MCF 10A (cell line): ENCODE measurements at regions of chr1 and their contacts with region 1.

Region 1: DNA sequence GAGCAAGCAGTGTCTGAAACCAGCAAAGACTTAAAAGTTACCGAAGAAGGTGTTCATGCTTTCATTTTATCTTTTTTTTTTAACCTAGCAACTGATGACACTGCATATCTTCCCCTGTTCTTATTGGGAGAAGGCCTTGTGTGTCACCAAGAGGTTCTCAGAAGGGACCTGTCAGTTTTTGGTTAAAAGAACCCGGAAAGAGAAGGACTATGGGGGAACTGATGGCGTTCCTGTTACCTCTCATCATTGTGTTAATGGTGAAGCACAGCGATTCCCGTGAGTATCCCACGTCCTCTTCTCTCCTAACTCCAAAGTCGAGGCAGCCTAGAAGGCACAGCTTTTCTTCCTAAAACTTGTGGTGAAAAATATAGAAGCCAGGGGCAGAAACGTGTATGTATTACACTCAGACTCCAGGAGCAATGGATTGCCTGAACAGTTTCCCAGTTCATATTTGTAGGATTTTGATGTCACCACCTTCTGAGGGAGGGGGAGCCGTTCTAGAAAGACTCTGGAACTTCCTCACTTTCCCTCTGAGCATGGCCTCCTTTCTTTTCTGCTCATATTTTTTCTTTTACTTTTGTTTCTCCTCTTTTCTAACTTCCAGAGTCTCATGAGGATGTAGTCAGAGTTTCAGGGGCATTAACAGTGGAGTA is at the start of gene MR1:
- DNase-seq: peak; percentile 94
- H3K4me3 Mint-ChIP-seq: peak within 1 kb of the TSS; percentile 91
- H3K27ac Mint-ChIP-seq: peak within 1 kb of the TSS; percentile 98
- H3K4me1 Mint-ChIP-seq: peaks cover 49% of the 10 kb centered on the region
- H3K27me3 Mint-ChIP-seq: no peaks in the 10 kb centered on the region
- CTCF ChIP-seq: no peak
- total RNA-seq, gene MR1: 33.4 and 46.6 TPM in 2 replicates

Region 2: GRCh38 chr1:180515864-180516388 is 518.0 kb before region 1 on chr1:
- CTCF ChIA-PET with region 1: interaction called, 6 read pairs
- POLR2A ChIA-PET with region 1: interaction called, 3 read pairs
- intact Hi-C with region 1: loop called (anchors 5 kb)
- DNase-seq: peak; percentile 95
- H3K4me3 Mint-ChIP-seq: no peak overlapping the region
- H3K27ac Mint-ChIP-seq: peak overlapping the region; percentile 91
- H3K4me1 Mint-ChIP-seq: peaks cover 7% of the 10 kb centered on the region
- H3K27me3 Mint-ChIP-seq: no peaks in the 10 kb centered on the region
- CTCF ChIP-seq: peak; percentile 98

Region 3: GRCh38 chr1:180762796-180763195 is 271.1 kb before region 1 on chr1:
- CTCF ChIA-PET with region 1: no interaction called
- POLR2A ChIA-PET with region 1: no interaction called
- intact Hi-C with region 1: no loop called
- DNase-seq: no peak
- H3K4me3 Mint-ChIP-seq: no peak overlapping the region
- H3K27ac Mint-ChIP-seq: no peak overlapping the region
- H3K4me1 Mint-ChIP-seq: no peaks in the 10 kb centered on the region
- H3K27me3 Mint-ChIP-seq: no peaks in the 10 kb centered on the region
- CTCF ChIP-seq: no peak

Region 4: GRCh38 chr1:180842052-180842451 is 191.9 kb before region 1 on chr1:
- CTCF ChIA-PET with region 1: no interaction called
- POLR2A ChIA-PET with region 1: no interaction called
- intact Hi-C with region 1: no loop called
- DNase-seq: no peak
- H3K4me3 Mint-ChIP-seq: no peak overlapping the region
- H3K27ac Mint-ChIP-seq: no peak overlapping the region
- H3K4me1 Mint-ChIP-seq: no peaks in the 10 kb centered on the region
- H3K27me3 Mint-ChIP-seq: no peaks in the 10 kb centered on the region
- CTCF ChIP-seq: no peak

Region 5: DNA sequence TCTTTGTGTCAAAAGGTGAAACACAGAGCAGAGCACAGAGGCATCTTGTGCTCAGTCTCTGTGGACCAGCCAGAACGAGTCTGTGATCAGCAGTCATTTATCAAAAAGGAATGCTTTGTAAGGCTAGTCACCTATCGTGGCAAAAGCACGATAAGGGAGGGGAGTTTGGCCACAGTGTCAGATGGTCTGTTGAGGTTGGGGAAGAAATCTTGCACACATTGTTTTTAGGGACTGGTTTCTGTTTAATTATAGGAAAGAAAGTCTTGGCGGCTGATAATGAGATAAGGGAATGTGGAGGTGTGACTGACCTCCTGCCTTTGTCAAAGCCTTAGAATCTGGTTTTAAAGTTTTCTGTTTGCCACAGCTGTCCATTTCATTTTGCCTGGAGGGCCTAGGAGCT is 179.4 kb before region 1 on chr1:
- CTCF ChIA-PET with region 1: no interaction called
- POLR2A ChIA-PET with region 1: no interaction called
- intact Hi-C with region 1: no loop called
- DNase-seq: no peak
- H3K4me3 Mint-ChIP-seq: no peak overlapping the region
- H3K27ac Mint-ChIP-seq: no peak overlapping the region
- H3K4me1 Mint-ChIP-seq: peaks cover 34% of the 10 kb centered on the region
- H3K27me3 Mint-ChIP-seq: no peaks in the 10 kb centered on the region
- CTCF ChIP-seq: no peak

Region 6: GRCh38 chr1:180954005-180954800 is 79.7 kb before region 1 on chr1:
- CTCF ChIA-PET with region 1: no interaction called
- POLR2A ChIA-PET with region 1: no interaction called
- intact Hi-C with region 1: no loop called
- DNase-seq: no peak
- H3K4me3 Mint-ChIP-seq: no peak overlapping the region
- H3K27ac Mint-ChIP-seq: no peak overlapping the region
- H3K4me1 Mint-ChIP-seq: peaks cover 5% of the 10 kb centered on the region
- H3K27me3 Mint-ChIP-seq: no peaks in the 10 kb centered on the region
- CTCF ChIP-seq: no peak

Region 7: DNA sequence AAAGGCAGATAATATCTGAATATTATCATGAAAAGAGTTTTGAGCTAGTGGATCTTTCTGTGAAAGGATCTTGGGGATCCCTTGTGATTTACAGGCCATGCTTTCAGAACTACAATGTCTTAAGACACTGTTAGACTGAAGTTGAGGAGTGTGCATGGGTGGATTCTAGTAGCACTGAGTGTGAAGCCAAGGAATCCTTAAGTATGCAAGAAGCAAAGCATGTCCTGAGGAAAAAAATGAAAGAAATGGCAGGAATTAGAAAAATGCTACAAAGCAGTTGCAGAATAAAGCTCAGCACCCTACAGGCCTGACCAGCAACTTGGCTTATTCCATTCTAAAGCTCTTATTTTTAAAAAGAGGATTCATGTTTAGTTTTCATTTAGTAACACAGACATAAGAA is 23.1 kb before region 1 on chr1:
- CTCF ChIA-PET with region 1: interaction called, 3 read pairs
- POLR2A ChIA-PET with region 1: interaction called, 13 read pairs
- intact Hi-C with region 1: no loop called
- DNase-seq: no peak
- H3K4me3 Mint-ChIP-seq: no peak overlapping the region
- H3K27ac Mint-ChIP-seq: no peak overlapping the region
- H3K4me1 Mint-ChIP-seq: peaks cover 27% of the 10 kb centered on the region
- H3K27me3 Mint-ChIP-seq: no peaks in the 10 kb centered on the region
- CTCF ChIP-seq: no peak

Region 8: DNA sequence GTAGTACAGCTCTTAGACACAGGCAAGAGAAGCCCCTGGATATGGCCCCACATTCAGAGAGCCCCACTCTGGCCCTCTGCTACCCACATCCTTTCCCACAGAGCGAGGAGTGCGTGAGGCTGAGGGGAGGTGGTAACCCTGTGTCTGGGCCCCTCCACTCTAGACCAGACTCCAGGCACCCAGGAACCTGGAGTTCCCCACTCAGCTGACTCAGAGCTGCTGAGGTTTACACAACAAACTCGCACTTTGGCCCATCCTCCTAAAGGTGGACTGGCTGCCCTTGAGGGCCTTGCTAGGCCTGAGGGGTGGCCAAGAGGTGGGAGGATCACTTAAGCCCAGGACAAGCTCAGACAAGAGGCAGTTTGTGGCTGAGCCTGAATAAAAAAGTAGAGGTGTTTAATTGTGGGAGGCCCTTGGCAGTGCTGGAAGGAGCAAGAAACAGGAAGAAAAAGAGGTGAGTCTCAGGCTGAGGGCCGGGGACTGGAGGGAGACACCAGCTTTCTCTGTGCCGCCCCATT is 10.6 kb after region 1 on chr1:
- CTCF ChIA-PET with region 1: interaction called, 10 read pairs
- POLR2A ChIA-PET with region 1: interaction called, 94 read pairs
- intact Hi-C with region 1: no loop called
- DNase-seq: peak; percentile 99
- H3K4me3 Mint-ChIP-seq: peak overlapping the region; percentile 58
- H3K27ac Mint-ChIP-seq: peak overlapping the region; percentile 88
- H3K4me1 Mint-ChIP-seq: peaks cover 41% of the 10 kb centered on the region
- H3K27me3 Mint-ChIP-seq: no peaks in the 10 kb centered on the region
- CTCF ChIP-seq: no peak

Region 9: DNA sequence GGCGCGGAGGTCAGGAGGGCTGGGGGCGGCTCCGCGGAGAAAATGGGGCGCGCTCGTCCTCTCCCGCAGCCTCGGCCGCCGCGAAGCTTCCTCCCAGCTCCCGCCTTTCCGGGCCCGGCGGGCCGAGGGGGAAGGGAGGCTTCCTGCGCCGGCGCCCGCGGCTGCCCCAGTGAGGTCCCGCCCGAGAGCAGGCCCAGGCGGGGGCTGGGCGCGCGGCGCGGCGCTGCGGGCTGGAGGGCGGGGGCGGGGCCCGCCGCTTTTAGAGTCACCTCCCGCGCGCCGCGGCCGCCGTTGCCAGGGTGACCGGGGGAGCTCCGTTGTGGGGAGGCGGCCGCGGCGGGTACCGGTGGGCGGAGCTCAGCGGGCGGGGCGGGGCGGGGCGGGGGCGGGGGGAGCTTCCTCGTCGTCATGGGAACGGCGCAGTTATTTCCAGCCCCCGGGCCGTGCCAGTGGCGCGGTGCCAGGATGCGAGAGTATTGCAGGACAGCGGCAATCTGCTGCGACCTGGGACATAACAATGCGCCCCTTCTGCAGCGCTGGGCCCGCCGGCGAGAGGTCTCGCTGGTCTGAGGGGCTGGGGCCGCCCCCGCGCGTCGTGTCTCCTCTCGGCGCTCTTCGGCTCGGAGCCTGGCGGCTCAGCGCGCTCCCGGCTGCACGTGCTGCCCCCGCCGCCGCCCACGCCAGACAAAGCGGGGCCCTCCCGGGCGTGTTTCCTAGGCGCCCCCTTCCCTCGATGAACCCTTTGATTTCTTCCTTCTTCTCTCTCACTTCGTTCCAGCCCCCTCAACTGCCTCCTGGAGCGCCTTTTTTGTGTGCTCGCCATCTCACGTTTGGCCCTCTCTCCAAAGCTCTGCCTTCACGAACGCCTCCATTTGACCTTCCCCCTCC is 71.5 kb after region 1 on chr1:
- CTCF ChIA-PET with region 1: no interaction called
- POLR2A ChIA-PET with region 1: interaction called, 22 read pairs
- intact Hi-C with region 1: no loop called
- DNase-seq: peak; percentile 95
- H3K4me3 Mint-ChIP-seq: peak overlapping the region; percentile 65
- H3K27ac Mint-ChIP-seq: peak overlapping the region; percentile 22
- H3K4me1 Mint-ChIP-seq: peaks cover 61% of the 10 kb centered on the region
- H3K27me3 Mint-ChIP-seq: no peaks in the 10 kb centered on the region
- CTCF ChIP-seq: no peak

Region 10: GRCh38 chr1:181134543-181135362 is 100.8 kb after region 1 on chr1:
- CTCF ChIA-PET with region 1: interaction called, 135 read pairs
- POLR2A ChIA-PET with region 1: interaction called, 67 read pairs
- intact Hi-C with region 1: no loop called
- DNase-seq: peak; percentile 96
- H3K4me3 Mint-ChIP-seq: peak overlapping the region; percentile 71
- H3K27ac Mint-ChIP-seq: peak overlapping the region; percentile 100
- H3K4me1 Mint-ChIP-seq: peaks cover 53% of the 10 kb centered on the region
- H3K27me3 Mint-ChIP-seq: no peaks in the 10 kb centered on the region
- CTCF ChIP-seq: no peak